Panc1 (cell line): ENCODE measurements at regions of chr7 and their contacts with region 1.

Region 1: GRCh38 chr7:130063036-130063435 is 7.3 kb upstream of the KLHDC10 start:
- DNase-seq: no peak
- ATAC-seq: peak; percentile 52; the same call in 1 of the 2 replicates
- H3K4me3 ChIP-seq: no peak overlapping the region
- H3K27ac ChIP-seq: no peak overlapping the region
- H3K4me1 ChIP-seq: no peaks in the 10 kb centered on the region
- H3K27me3 ChIP-seq: no peaks in the 10 kb centered on the region
- CTCF ChIP-seq: peak; percentile 93

Region 2: DNA sequence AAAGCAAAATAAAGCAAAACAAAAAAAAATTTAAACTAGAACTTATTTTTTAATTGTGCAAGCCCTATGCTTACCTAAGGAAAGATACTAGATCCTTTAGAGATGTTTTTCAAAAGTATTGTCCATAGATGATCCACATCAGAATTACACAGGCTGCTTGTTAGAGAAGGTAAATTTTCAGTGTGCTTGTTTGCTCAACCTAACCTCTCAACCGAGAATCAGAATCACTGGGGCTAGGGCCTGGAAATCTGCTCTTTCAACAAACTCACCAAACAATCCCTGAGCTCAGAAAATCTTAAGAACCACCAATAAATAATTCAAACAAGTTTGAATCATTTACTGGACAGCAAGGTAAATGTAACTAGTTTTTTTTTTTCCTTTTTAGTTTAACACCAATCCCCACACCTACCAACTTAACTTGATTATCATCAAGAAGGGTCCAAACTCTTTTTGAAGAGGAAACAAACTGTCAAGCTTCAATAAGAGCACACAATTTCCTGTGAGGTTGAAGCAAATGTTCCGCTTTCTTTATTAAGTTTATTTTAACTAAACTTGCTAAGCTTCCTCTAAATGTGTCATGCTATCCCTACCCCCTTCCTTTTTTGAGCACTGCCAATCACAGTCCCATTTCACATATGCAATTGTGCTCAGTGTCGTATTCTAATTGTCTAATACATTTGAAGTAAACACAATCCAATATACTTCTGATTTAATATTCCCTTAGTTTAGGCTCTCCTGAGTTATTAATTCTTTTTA is 926.0 kb before region 1 on chr7:
- CTCF ChIA-PET with region 1: no interaction called
- POLR2A ChIA-PET with region 1: no interaction called
- in situ Hi-C with region 1: no loop called
- intact Hi-C with region 1: no loop called
- DNase-seq: no peak
- ATAC-seq: no peak
- H3K4me3 ChIP-seq: no peak overlapping the region
- H3K27ac ChIP-seq: no peak overlapping the region
- H3K4me1 ChIP-seq: no peaks in the 10 kb centered on the region
- H3K27me3 ChIP-seq: peaks cover 4% of the 10 kb centered on the region; the same call in 1 of the 2 replicates
- CTCF ChIP-seq: no peak

Region 3: DNA sequence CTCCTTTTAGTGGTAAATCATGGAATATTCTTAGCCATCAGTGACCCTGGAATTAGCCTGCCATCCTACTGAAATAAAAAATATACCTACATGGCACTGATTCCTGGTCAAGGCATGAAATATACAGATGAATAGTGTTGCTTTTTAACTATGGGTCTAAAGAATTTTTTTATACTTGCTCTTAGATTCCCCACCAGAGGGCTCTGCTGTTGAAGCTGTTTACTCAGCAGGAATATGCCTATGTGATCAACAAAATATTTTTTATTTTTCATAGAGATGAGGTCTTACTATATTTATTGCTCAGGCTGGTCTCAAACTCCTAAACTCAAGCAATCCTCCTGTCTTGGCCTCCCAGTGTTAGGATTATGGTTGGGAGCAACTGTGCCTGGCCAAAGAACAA is 25.3 kb before region 1 on chr7:
- CTCF ChIA-PET with region 1: interaction called, 11 read pairs
- POLR2A ChIA-PET with region 1: no interaction called
- in situ Hi-C with region 1: no loop called
- intact Hi-C with region 1: no loop called
- DNase-seq: no peak
- ATAC-seq: no peak
- H3K4me3 ChIP-seq: no peak overlapping the region
- H3K27ac ChIP-seq: no peak overlapping the region
- H3K4me1 ChIP-seq: no peaks in the 10 kb centered on the region
- H3K27me3 ChIP-seq: no peaks in the 10 kb centered on the region
- CTCF ChIP-seq: no peak; the same call in 1 of the 2 replicates